ENCODE measurements at regions of chr4 and their contacts with region 1.

Region 1: GRCh38 chr4:121370729-121371325 is 10.0 kb downstream of the QRFPR start:
- DNase-seq: peak; percentile 66
- H3K4me3 Mint-ChIP-seq: no peak overlapping the region
- H3K27ac Mint-ChIP-seq: no peak overlapping the region
- H3K4me1 Mint-ChIP-seq: no peaks in the 10 kb centered on the region
- H3K27me3 Mint-ChIP-seq: peaks cover 9% of the 10 kb centered on the region

Region 2: GRCh38 chr4:120557372-120557771 is 813.5 kb before region 1 on chr4:
- CTCF ChIA-PET with region 1: no interaction called
- intact Hi-C with region 1: no loop called
- DNase-seq: no peak
- H3K4me3 Mint-ChIP-seq: no peak overlapping the region
- H3K27ac Mint-ChIP-seq: no peak overlapping the region
- H3K4me1 Mint-ChIP-seq: no peaks in the 10 kb centered on the region
- H3K27me3 Mint-ChIP-seq: peaks cover 13% of the 10 kb centered on the region

Region 3: GRCh38 chr4:121397941-121398601 is 27.2 kb after region 1 on chr4:
- CTCF ChIA-PET with region 1: interaction called, 10 read pairs
- intact Hi-C with region 1: no loop called
- DNase-seq: no peak
- H3K4me3 Mint-ChIP-seq: no peak overlapping the region
- H3K27ac Mint-ChIP-seq: no peak overlapping the region
- H3K4me1 Mint-ChIP-seq: no peaks in the 10 kb centered on the region
- H3K27me3 Mint-ChIP-seq: no peaks in the 10 kb centered on the region

Region 4: GRCh38 chr4:121421594-121421993 is 50.8 kb after region 1 on chr4:
- CTCF ChIA-PET with region 1: interaction called, 10 read pairs
- intact Hi-C with region 1: loop called (anchors 5 kb)
- DNase-seq: no peak
- H3K4me3 Mint-ChIP-seq: no peak overlapping the region
- H3K27ac Mint-ChIP-seq: no peak overlapping the region
- H3K4me1 Mint-ChIP-seq: no peaks in the 10 kb centered on the region
- H3K27me3 Mint-ChIP-seq: peaks cover 11% of the 10 kb centered on the region

Region 5: GRCh38 chr4:121510341-121510874 is 139.6 kb after region 1 on chr4:
- CTCF ChIA-PET with region 1: no interaction called
- intact Hi-C with region 1: no loop called
- DNase-seq: no peak
- H3K4me3 Mint-ChIP-seq: no peak overlapping the region
- H3K27ac Mint-ChIP-seq: no peak overlapping the region
- H3K4me1 Mint-ChIP-seq: no peaks in the 10 kb centered on the region
- H3K27me3 Mint-ChIP-seq: peaks cover 25% of the 10 kb centered on the region

Region 6: GRCh38 chr4:121656269-121656641 is 285.4 kb after region 1 on chr4:
- CTCF ChIA-PET with region 1: interaction called, 5 read pairs
- intact Hi-C with region 1: loop called (anchors 1 kb)
- DNase-seq: peak; percentile 56
- H3K4me3 Mint-ChIP-seq: no peak overlapping the region
- H3K27ac Mint-ChIP-seq: no peak overlapping the region
- H3K4me1 Mint-ChIP-seq: no peaks in the 10 kb centered on the region
- H3K27me3 Mint-ChIP-seq: peaks cover 6% of the 10 kb centered on the region

Measured in activated naive CD4-positive, alpha-beta T cell treated with anti-CD3 and anti-CD28 coated beads for 36 hours (primary cell).